Activated T-helper 2 cell treated with anti-CD3 and anti-CD28 coated beads, Interferon-gamma antibody, Interleukin-2, Interleukin-4, amounts not matched to agents 10 μg/mL and 5 μg/mL and 100 μg/mL, durations not matched to agents 14 hours and 24 hours and 36 hours (primary cell): ENCODE measurements at regions of chr14 and their contacts with region 1.

Region 1: GRCh38 chr14:63770187-63770807 is 42.4 kb upstream of the SGPP1 start:
- DNase-seq: peak; percentile 31
- H3K4me3 Mint-ChIP-seq: no peak overlapping the region
- H3K27ac Mint-ChIP-seq: no peak overlapping the region
- H3K4me1 Mint-ChIP-seq: peaks cover 11% of the 10 kb centered on the region
- H3K27me3 Mint-ChIP-seq: no peaks in the 10 kb centered on the region

Region 2: DNA sequence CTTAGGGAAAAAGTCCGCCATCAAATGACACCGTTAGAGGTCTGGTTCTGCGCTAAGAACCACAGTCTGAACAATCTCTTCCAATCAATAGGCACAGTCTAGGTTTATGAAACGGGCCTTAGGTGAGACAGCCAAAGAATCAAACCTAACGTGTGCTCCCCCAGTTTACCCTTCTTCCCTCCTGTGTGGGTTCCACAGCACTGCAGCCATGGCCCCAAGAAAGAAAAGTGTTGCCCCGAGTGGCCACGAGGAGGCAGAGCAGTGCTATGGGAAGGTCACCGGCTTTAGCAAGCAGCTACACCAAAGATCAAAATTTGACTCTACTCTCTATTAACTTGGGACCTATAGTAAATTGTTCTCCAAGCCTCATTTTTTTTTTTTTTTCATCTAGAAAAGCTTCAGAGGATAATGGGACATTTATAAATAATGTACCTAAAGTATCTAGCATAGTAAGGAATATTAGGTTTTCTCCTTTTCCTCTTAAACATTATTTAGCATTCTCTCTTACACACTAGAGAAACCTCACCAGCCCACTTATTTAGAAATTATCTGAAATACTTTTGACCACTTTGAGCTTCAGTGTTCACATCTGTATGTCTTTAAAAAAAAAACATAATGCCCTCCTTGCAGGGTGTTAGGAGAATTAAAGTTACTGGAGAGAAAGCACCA is 381.4 kb before region 1 on chr14:
- intact Hi-C with region 1: loop called (anchors 1 kb)
- DNase-seq: peak; percentile 48
- H3K4me3 Mint-ChIP-seq: no peak overlapping the region
- H3K27ac Mint-ChIP-seq: no peak overlapping the region
- H3K4me1 Mint-ChIP-seq: peaks cover 8% of the 10 kb centered on the region
- H3K27me3 Mint-ChIP-seq: no peaks in the 10 kb centered on the region

Region 3: DNA sequence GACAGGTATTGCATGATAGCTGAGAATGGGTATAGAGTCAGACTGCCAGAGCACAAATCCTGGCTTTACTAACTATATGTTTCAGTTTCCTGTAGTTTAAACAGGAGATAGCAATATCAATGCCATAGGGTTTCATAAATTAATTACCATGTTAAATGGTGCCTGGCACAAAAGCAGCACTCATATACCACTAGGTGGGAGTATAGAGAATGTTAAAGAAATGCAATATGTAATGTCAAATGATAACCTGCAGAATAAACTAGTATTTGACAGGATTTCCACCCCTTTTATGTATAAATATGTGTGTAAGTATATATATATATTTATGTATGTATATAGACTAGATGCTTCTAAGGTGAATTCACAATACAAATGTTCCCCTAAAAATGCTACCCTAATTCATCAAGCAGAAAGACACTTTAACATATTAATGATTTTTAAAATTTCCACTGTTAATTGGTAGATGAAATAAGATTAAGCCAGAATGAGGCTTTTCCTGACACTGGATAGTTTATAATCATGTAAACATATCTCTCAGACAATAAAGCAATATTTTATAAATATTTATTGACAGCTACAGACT is 137.3 kb before region 1 on chr14:
- intact Hi-C with region 1: loop called (anchors 1 kb)
- DNase-seq: no peak
- H3K4me3 Mint-ChIP-seq: no peak overlapping the region
- H3K27ac Mint-ChIP-seq: no peak overlapping the region
- H3K4me1 Mint-ChIP-seq: peaks cover 20% of the 10 kb centered on the region
- H3K27me3 Mint-ChIP-seq: no peaks in the 10 kb centered on the region

Region 4: GRCh38 chr14:63745858-63746425 is 24.4 kb before region 1 on chr14:
- intact Hi-C with region 1: no loop called
- DNase-seq: peak; percentile 14
- H3K4me3 Mint-ChIP-seq: no peak overlapping the region
- H3K27ac Mint-ChIP-seq: no peak overlapping the region
- H3K4me1 Mint-ChIP-seq: peaks cover 14% of the 10 kb centered on the region
- H3K27me3 Mint-ChIP-seq: peaks cover 3% of the 10 kb centered on the region